GM23248 (cell line): ENCODE measurements at regions of chr15 and their contacts with region 1.

Region 1: DNA sequence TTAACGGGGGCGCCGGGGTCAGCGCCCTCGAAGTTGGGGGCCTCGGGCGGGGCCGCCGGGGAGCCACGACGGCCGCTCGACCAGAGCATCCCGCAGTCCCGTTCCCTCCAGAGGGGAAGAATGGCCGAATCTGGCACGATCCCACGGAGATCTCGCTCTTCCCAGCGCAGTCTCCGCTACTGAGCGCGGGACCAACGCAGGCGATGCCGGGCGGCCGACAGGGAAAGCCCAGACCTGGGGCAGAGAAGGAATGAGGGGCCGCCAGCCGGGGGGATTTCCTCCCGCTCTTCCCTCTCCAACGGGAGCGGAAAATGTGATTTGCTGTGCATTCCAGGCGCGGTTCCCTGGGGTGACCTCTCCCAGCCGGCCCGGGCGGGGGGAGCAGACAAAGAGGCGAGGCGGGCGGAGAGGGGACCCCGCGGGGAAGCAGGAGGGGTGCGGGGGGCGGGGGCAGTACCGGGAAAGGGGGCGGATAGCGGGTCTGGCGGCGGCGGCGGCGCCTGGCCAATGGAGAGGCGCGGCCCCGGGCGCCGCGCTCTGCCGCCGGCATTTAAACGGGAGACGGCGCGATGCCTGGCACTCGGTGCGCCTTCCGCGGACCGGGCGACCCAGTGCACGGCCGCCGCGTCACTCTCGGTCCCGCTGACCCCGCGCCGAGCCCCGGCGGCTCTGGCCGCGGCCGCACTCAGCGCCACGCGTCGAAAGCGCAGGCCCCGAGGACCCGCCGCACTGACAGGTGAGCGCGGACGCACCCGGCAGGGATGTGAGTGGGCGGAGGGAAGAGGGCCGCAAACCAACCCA is at the start of gene GREM1:
- DNase-seq: peak; percentile 84
- H3K4me3 ChIP-seq: peak within 1 kb of the TSS; percentile 93
- H3K27ac ChIP-seq: peak within 1 kb of the TSS; percentile 84
- H3K4me1 ChIP-seq: peaks cover 36% of the 10 kb centered on the region
- H3K27me3 ChIP-seq: no peaks in the 10 kb centered on the region
- total RNA-seq, gene GREM1: 935 and 1,005 TPM in 2 replicates

Region 2: GRCh38 chr15:32148833-32149555 is 568.6 kb before region 1 on chr15:
- in situ Hi-C with region 1: no loop called
- DNase-seq: no peak
- H3K4me3 ChIP-seq: no peak overlapping the region
- H3K27ac ChIP-seq: no peak overlapping the region
- H3K4me1 ChIP-seq: no peaks in the 10 kb centered on the region
- H3K27me3 ChIP-seq: no peaks in the 10 kb centered on the region

Region 3: GRCh38 chr15:32669896-32670619 is 47.6 kb before region 1 on chr15:
- in situ Hi-C with region 1: loop called (anchors 5 kb)
- DNase-seq: peak; percentile 91
- H3K4me3 ChIP-seq: peak overlapping the region; percentile 61
- H3K27ac ChIP-seq: peak overlapping the region; percentile 95
- H3K4me1 ChIP-seq: peaks cover 48% of the 10 kb centered on the region
- H3K27me3 ChIP-seq: no peaks in the 10 kb centered on the region